ENCODE measurements at regions of chr12 and their contacts with region 1.

Region 1: DNA sequence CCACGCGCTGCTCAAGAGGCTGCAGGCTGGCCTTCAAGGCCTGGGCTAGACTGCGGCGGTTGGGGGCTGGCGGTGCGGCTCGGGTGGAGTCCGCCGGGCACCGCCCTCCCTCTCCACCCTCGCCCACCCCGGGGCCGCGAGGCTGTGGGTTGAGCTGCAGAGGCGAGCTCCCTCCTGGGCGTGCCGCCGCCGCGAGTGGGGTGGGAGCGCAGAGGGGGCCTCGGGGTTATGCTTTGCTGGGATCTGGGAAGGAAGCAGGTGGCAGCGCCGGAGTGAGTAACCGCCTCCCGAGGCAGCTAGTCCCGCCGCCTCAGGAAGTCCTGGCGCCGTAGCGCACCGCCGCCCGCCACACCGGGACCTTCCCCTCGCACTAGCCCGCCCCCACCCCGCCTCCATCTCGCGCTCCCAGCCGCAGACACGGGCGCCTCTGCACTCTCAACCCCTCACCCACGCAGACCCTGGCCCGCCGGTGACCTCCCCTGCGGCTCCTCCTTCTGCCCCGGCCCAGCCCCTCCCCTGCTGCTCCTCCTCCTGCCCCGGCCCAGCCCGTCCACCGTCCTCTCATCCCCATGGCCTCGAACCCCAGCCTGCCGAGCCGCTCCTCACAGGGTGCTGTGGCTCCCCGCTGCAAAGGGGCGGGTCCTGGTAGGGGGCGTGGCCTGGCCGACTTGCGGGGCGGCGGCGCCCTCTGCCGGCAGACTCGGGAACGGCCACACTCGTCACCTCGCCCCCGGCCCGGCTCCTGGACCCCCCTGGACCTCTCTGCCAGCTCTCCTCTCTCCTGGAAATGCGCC is 16.6 kb downstream of the TAMALIN start:
- DNase-seq: peak; percentile 81 to 94 (median 91)
- ATAC-seq: peak; percentile 63
- H3K4me3 ChIP-seq: peak overlapping the region; percentile 53 to 66
- H3K4me3 Mint-ChIP-seq: peak overlapping the region; percentile 81
- H3K27ac ChIP-seq: peak overlapping the region; percentile 17 to 44
- H3K27ac Mint-ChIP-seq: peak overlapping the region; percentile 75
- H3K4me1 ChIP-seq: peaks cover 39% of the 10 kb centered on the region
- H3K4me1 Mint-ChIP-seq: peaks cover 43% of the 10 kb centered on the region
- H3K27me3 ChIP-seq: no peaks in the 10 kb centered on the region
- H3K27me3 Mint-ChIP-seq: no peaks in the 10 kb centered on the region
- CTCF ChIP-seq: peak; percentile 86

Region 2: DNA sequence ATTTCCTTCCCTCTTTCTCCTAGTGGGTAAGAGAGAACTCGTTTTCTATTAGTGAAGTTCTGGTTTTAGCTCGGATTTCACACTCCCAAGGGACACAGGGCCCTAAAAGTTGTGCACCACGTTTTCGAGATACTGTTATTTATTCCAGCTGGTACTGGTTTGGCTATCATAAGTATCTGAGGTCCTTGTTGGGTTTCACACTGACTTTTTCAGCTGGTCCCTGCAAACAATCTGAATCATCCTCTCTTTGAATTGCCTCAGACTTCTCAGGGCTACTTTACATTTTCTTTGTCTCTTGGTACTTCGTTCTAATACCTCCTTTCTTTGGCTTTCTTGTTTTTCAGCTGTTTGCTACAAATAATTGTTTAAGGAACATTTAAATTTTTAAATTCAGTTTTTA is 356.7 kb before region 1 on chr12:
- CTCF ChIA-PET with region 1: no interaction called
- POLR2A ChIA-PET with region 1: no interaction called
- intact Hi-C with region 1: no loop called
- DNase-seq: no peak
- ATAC-seq: no peak
- H3K4me3 ChIP-seq: no peak overlapping the region
- H3K4me3 Mint-ChIP-seq: no peak overlapping the region
- H3K27ac ChIP-seq: no peak overlapping the region
- H3K27ac Mint-ChIP-seq: no peak overlapping the region
- H3K4me1 ChIP-seq: peaks cover 8% of the 10 kb centered on the region
- H3K4me1 Mint-ChIP-seq: peaks cover 12% of the 10 kb centered on the region
- H3K27me3 ChIP-seq: no peaks in the 10 kb centered on the region
- H3K27me3 Mint-ChIP-seq: no peaks in the 10 kb centered on the region
- CTCF ChIP-seq: no peak

Region 3: GRCh38 chr12:51951199-51951842 is 72.1 kb before region 1 on chr12 and contains the start of gene ACVR1B:
- CTCF ChIA-PET with region 1: interaction called, 9 read pairs
- POLR2A ChIA-PET with region 1: no interaction called
- intact Hi-C with region 1: loop called (anchors 1 kb)
- DNase-seq: peak; percentile 84 to 95 (median 91)
- ATAC-seq: peak; percentile 95
- H3K4me3 ChIP-seq: peak within 1 kb of the TSS; percentile 76 to 93
- H3K4me3 Mint-ChIP-seq: peak within 1 kb of the TSS; percentile 98
- H3K27ac ChIP-seq: peak within 1 kb of the TSS; percentile 44 to 69
- H3K27ac Mint-ChIP-seq: peak within 1 kb of the TSS; percentile 91
- H3K4me1 ChIP-seq: peaks cover 38% of the 10 kb centered on the region
- H3K4me1 Mint-ChIP-seq: peaks cover 42% of the 10 kb centered on the region
- H3K27me3 ChIP-seq: no peaks in the 10 kb centered on the region
- H3K27me3 Mint-ChIP-seq: no peaks in the 10 kb centered on the region
- CTCF ChIP-seq: no peak
- total RNA-seq, gene ACVR1B: 12.0 to 13.7 TPM

Region 4: GRCh38 chr12:51980051-51980808 is 43.1 kb before region 1 on chr12:
- CTCF ChIA-PET with region 1: interaction called, 1,615 read pairs
- POLR2A ChIA-PET with region 1: no interaction called
- intact Hi-C with region 1: loop called in 1 of 2 experiments (anchors 1 kb)
- DNase-seq: peak; percentile 43 to 83 (median 68)
- ATAC-seq: peak; percentile 100
- H3K4me3 ChIP-seq: no peak overlapping the region
- H3K4me3 Mint-ChIP-seq: no peak overlapping the region
- H3K27ac ChIP-seq: no peak overlapping the region
- H3K27ac Mint-ChIP-seq: no peak overlapping the region
- H3K4me1 ChIP-seq: peaks cover 7% of the 10 kb centered on the region
- H3K4me1 Mint-ChIP-seq: peaks cover 26% of the 10 kb centered on the region
- H3K27me3 ChIP-seq: no peaks in the 10 kb centered on the region
- H3K27me3 Mint-ChIP-seq: no peaks in the 10 kb centered on the region
- CTCF ChIP-seq: peak; percentile 95

Region 5: DNA sequence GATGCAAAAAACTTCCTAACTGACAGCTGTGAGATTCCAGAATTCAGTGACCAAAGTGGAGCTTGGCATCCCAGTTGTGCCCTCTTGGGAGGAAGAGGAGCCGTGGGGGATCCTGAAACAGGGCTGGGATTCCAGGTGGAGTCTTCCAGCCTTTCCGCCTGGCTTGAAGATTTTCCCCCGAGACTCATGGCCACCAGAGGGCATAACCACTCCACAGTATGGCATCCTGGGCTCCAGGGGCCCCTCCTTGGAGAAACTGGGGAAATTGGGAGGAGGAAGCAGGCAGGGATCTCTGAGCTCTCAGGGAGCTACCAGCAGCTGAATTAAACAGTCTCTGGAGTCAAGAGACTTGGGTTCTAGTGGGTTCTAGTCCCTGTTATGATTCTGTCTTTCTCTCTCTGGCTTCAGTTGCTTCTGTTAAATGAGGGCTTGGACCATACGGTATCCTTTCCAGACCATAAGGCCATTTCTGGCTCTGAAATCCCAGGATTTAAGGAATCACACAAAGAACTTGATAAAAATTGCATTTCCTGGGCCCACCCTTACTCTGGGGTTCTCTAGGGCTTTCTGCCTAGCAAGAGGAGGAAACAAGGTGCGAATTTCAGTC is 19.2 kb before region 1 on chr12:
- CTCF ChIA-PET with region 1: interaction called, 1,615 read pairs
- POLR2A ChIA-PET with region 1: interaction called, 92 read pairs
- intact Hi-C with region 1: loop called (anchors 1 kb)
- DNase-seq: peak in 2 of 9 experiments; percentile 33 to 48
- ATAC-seq: no peak
- H3K4me3 ChIP-seq: no peak overlapping the region
- H3K4me3 Mint-ChIP-seq: no peak overlapping the region
- H3K27ac ChIP-seq: no peak overlapping the region
- H3K27ac Mint-ChIP-seq: no peak overlapping the region
- H3K4me1 ChIP-seq: peaks cover 20% of the 10 kb centered on the region
- H3K4me1 Mint-ChIP-seq: peaks cover 18% of the 10 kb centered on the region
- H3K27me3 ChIP-seq: peaks cover 0 to 4% of the 10 kb centered on the region in 2 experiments
- H3K27me3 Mint-ChIP-seq: no peaks in the 10 kb centered on the region
- CTCF ChIP-seq: peak; percentile 34

Region 6: DNA sequence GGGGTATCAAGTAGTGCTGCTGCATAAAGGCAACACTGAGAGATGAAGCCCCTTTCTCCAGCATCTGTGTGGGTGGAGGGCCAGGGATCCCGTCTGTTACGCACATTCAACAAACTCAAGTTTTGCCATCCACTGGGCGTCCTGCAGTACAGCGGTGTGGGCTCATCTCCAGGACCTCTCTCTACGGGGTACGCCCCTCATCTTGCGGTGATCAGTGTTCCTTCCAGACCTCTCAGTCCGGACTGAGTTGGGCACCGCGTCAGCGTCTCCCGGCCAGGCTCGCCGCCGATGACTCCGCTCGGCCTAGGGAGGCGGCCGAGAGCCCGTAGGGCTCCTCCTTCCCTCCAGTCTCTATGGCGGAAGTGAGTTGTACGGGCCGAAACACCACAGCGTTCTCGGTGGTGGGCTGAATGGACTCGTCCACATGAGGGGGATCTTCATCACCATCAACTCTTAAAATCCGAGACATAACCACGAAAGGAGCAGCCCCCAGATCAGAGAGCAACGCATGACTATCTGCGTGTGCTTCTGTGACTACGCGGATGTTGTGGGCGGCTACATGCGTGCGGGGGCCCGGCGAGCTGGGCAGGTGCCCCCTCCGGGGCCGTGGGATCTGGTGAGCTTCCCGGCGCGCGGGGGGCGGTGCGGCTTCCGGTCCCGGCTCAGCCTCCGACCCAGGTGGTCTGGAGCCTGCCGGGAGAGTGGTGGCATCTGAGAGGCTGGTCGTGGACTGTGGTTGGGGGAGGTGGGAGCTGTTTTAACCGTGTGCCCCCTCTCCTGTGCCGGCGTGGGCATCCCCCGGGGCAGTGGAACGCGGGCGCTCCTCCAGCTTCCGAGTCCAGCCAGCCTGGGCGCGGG is 46.2 kb after region 1 on chr12 and contains the start of gene ATG101:
- CTCF ChIA-PET with region 1: interaction called, 896 read pairs
- POLR2A ChIA-PET with region 1: interaction called, 27 read pairs
- intact Hi-C with region 1: loop called (anchors 1 kb)
- DNase-seq: peak; percentile 72 to 96 (median 84)
- ATAC-seq: peak; percentile 93
- H3K4me3 ChIP-seq: peak within 1 kb of the TSS; percentile 93 to 98
- H3K4me3 Mint-ChIP-seq: peak within 1 kb of the TSS; percentile 98
- H3K27ac ChIP-seq: peak within 1 kb of the TSS; percentile 87 to 96
- H3K27ac Mint-ChIP-seq: peak within 1 kb of the TSS; percentile 99
- H3K4me1 ChIP-seq: peaks cover 33% of the 10 kb centered on the region
- H3K4me1 Mint-ChIP-seq: peaks cover 47% of the 10 kb centered on the region
- H3K27me3 ChIP-seq: no peaks in the 10 kb centered on the region
- H3K27me3 Mint-ChIP-seq: no peaks in the 10 kb centered on the region
- CTCF ChIP-seq: peak; percentile 47
- total RNA-seq, gene ATG101: 19.1 to 19.3 TPM

Region 7: DNA sequence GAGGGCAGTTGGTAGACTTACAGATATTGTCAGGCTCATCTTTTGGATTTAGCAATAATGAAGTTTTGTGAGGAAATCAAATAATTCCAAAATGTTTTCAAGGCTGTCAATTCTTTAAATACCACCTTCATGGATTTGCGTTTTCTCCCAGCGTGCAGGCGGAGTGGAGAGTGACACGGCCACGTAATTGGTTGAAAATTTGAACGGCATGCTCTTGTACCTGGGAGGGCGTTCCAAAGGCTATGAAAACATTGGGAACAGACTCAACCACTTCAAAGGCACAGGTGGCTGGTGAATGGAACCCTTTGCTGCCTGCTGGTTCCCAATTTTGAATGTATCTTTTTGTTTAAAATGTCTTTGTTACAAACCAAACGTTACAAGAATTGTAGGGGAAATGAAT is 68.5 kb after region 1 on chr12:
- CTCF ChIA-PET with region 1: interaction called, 896 read pairs
- POLR2A ChIA-PET with region 1: interaction called, 3 read pairs
- intact Hi-C with region 1: no loop called
- DNase-seq: no peak
- ATAC-seq: no peak
- H3K4me3 ChIP-seq: no peak overlapping the region
- H3K4me3 Mint-ChIP-seq: no peak overlapping the region
- H3K27ac ChIP-seq: no peak overlapping the region
- H3K27ac Mint-ChIP-seq: no peak overlapping the region
- H3K4me1 ChIP-seq: no peaks in the 10 kb centered on the region
- H3K4me1 Mint-ChIP-seq: no peaks in the 10 kb centered on the region
- H3K27me3 ChIP-seq: peaks cover 0 to 5% of the 10 kb centered on the region in 2 experiments
- H3K27me3 Mint-ChIP-seq: peaks cover 47% of the 10 kb centered on the region
- CTCF ChIP-seq: no peak